Dendritic cell treated with granulocyte-macrophage colony-stimulating factor and Interleukin-4, amounts not matched to agents 40 ng/mL and 50 ng/mL, for 4 days (primary cell): ENCODE measurements at regions of chr12 and their contacts with region 1.

Region 1: GRCh38 chr12:6890789-6891645 is 13.6 kb upstream of the LRRC23 start:
- H3K4me3 Mint-ChIP-seq: peak overlapping the region; percentile 71
- H3K27ac Mint-ChIP-seq: peak overlapping the region; percentile 93
- H3K4me1 Mint-ChIP-seq: peaks cover 33% of the 10 kb centered on the region
- H3K27me3 Mint-ChIP-seq: no peaks in the 10 kb centered on the region

Region 2: GRCh38 chr12:6873094-6874014 is 17.7 kb before region 1 on chr12 and contains the start of gene SPSB2:
- intact Hi-C with region 1: loop called (anchors 1 kb)
- H3K4me3 Mint-ChIP-seq: peak within 1 kb of the TSS; percentile 97
- H3K27ac Mint-ChIP-seq: peak within 1 kb of the TSS; percentile 87
- H3K4me1 Mint-ChIP-seq: peaks cover 51% of the 10 kb centered on the region
- H3K27me3 Mint-ChIP-seq: no peaks in the 10 kb centered on the region

Region 3: GRCh38 chr12:6904280-6905278 is 13.6 kb after region 1 on chr12 and contains the start of gene LRRC23:
- intact Hi-C with region 1: loop called (anchors 1 kb)
- H3K4me3 Mint-ChIP-seq: no peak within 1 kb of the TSS
- H3K27ac Mint-ChIP-seq: no peak within 1 kb of the TSS
- H3K4me1 Mint-ChIP-seq: peaks cover 8% of the 10 kb centered on the region
- H3K27me3 Mint-ChIP-seq: peaks cover under 1% of the 10 kb centered on the region

Region 4: GRCh38 chr12:7005311-7005710 is 114.3 kb after region 1 on chr12:
- intact Hi-C with region 1: no loop called
- H3K4me3 Mint-ChIP-seq: peak overlapping the region; percentile 44
- H3K27ac Mint-ChIP-seq: peak overlapping the region; percentile 90
- H3K4me1 Mint-ChIP-seq: peaks cover 67% of the 10 kb centered on the region
- H3K27me3 Mint-ChIP-seq: no peaks in the 10 kb centered on the region